ENCODE measurements at regions of chr12 and their contacts with region 1.

Region 1: GRCh38 chr12:15276088-15276698 is 46.1 kb upstream of the PTPRO start:
- DNase-seq: no peak
- ATAC-seq: peak; percentile 75 to 82 (median 78)
- H3K4me3 ChIP-seq: no peak overlapping the region
- H3K27ac ChIP-seq: no peak overlapping the region
- H3K4me1 ChIP-seq: no peaks in the 10 kb centered on the region
- H3K27me3 ChIP-seq: no peaks in the 10 kb centered on the region
- CTCF ChIP-seq: peak; percentile 69 to 76 (median 73)
- POLR2A ChIP-seq: no peak

Region 2: DNA sequence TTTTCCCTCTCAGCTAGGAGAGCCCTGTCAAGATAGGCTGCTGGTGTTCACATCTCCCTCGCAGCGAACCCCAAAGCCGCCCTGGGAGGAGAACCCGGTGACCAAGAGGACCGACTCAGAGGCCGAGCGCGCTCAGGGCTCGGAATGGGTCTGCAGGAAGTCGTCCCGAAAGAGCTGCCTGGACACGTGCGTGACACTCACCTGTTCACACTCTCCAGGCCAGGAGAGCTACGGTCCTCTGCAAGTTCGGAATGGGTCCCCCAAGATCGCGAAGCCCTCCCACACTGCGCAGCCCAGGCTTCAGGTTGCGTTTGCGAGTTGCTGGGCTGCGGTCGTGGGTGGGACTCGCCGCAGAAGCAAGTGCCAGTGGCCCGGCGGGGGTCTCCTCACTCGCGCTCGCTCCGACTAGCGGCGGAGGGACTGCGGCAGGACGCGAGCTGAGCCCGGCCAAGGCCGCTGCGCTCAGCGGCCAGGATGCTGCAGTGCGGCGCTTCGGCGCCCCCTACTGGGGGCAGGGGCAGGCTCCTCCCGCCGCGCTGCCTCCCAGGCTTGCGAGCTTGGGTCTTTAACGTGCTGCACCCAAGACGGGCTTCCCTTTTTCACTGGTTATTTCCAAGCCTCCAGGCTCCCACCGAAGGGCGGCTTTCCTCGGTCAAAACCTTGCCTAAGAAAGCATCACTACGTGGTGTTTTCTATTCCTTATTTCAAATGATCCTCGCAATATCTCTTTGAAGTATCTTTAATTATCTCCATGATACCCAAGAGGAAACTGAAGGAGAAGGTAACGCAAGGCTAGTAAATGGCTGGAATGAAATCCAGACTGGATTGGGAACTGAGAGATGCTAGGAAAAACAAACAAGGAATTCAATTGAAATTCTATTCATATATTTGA is 55.0 kb before region 1 on chr12 and contains the start of gene RERG:
- intact Hi-C with region 1: no loop called
- DNase-seq: peak; percentile 81 to 83 (median 81)
- ATAC-seq: peak; percentile 100
- H3K4me3 ChIP-seq: peak within 1 kb of the TSS; percentile 35 to 53 (median 45)
- H3K27ac ChIP-seq: peak within 1 kb of the TSS; percentile 12 to 35 (median 23)
- H3K4me1 ChIP-seq: peaks cover 0 to 8% (median 2%) of the 10 kb centered on the region in 4 donors
- H3K27me3 ChIP-seq: no peaks in the 10 kb centered on the region
- CTCF ChIP-seq: peak; percentile 90 to 99 (median 97)
- POLR2A ChIP-seq: no peak
- total RNA-seq, gene RERG: 0.68 to 2.1 (median 1.0) TPM

Region 3: GRCh38 chr12:15306605-15307004 is 30.4 kb after region 1 on chr12:
- intact Hi-C with region 1: no loop called
- DNase-seq: no peak
- ATAC-seq: no peak
- H3K4me3 ChIP-seq: no peak overlapping the region
- H3K27ac ChIP-seq: no peak overlapping the region
- H3K4me1 ChIP-seq: no peaks in the 10 kb centered on the region
- H3K27me3 ChIP-seq: no peaks in the 10 kb centered on the region
- CTCF ChIP-seq: no peak
- POLR2A ChIP-seq: no peak

Region 4: DNA sequence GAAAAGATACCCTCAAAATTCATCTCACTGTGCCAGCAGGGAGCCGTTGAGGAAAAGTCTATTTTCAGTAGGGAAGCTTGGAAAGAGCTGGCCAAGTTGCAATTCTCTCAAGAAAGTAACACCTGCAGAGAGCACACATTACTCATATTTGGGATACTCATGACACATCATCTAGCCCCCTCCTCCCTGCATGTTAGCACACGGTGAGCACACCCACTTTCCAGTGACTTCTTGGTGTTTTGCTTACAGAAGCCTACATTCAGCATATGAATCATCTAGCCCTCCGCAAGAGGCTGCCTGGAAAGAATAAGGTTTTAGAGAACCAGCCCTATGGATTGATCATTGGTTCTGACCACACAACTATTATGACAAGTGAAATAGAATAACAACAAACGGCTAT is 170.6 kb after region 1 on chr12:
- intact Hi-C with region 1: no loop called
- DNase-seq: no peak
- ATAC-seq: no peak
- H3K4me3 ChIP-seq: no peak overlapping the region
- H3K27ac ChIP-seq: no peak overlapping the region
- H3K4me1 ChIP-seq: no peaks in the 10 kb centered on the region
- H3K27me3 ChIP-seq: no peaks in the 10 kb centered on the region
- CTCF ChIP-seq: no peak
- POLR2A ChIP-seq: no peak

Region 5: DNA sequence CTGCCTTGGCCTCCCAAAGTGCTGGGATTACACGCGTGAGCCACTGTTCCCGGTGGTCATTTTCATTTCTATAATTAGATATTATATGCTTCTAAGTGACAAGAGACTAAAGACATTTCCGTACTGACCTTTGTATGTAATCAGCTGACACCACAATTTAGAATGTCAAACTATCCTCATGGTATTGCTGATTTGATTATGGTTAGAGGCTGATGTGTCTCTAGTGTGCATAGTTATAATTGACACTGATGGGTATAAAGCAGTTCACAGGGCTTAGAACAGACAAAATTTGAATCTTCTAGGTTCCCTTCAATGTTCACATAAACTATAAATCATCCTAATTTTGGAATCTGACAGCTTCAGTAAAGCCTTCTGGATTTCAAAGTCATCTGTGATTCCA is 238.8 kb after region 1 on chr12:
- intact Hi-C with region 1: loop called (anchors 10 kb)
- DNase-seq: no peak
- ATAC-seq: no peak
- H3K4me3 ChIP-seq: no peak overlapping the region
- H3K27ac ChIP-seq: no peak overlapping the region
- H3K4me1 ChIP-seq: no peaks in the 10 kb centered on the region
- H3K27me3 ChIP-seq: no peaks in the 10 kb centered on the region
- CTCF ChIP-seq: no peak
- POLR2A ChIP-seq: no peak

Region 6: GRCh38 chr12:15522565-15523187 is 246.5 kb after region 1 on chr12:
- intact Hi-C with region 1: loop called (anchors 10 kb)
- DNase-seq: no peak
- ATAC-seq: peak; percentile 70 to 86 (median 76)
- H3K4me3 ChIP-seq: no peak overlapping the region
- H3K27ac ChIP-seq: no peak overlapping the region
- H3K4me1 ChIP-seq: no peaks in the 10 kb centered on the region
- H3K27me3 ChIP-seq: no peaks in the 10 kb centered on the region
- CTCF ChIP-seq: peak; percentile 52 to 64 (median 56)
- POLR2A ChIP-seq: no peak

Measured in right lobe of liver (tissue), 6 donors.